Activated CD4-positive, alpha-beta T cell treated with anti-CD3 and anti-CD28 coated beads for 36 hours (primary cell): ENCODE measurements at regions of chr1 and their contacts with region 1.

Region 1: DNA sequence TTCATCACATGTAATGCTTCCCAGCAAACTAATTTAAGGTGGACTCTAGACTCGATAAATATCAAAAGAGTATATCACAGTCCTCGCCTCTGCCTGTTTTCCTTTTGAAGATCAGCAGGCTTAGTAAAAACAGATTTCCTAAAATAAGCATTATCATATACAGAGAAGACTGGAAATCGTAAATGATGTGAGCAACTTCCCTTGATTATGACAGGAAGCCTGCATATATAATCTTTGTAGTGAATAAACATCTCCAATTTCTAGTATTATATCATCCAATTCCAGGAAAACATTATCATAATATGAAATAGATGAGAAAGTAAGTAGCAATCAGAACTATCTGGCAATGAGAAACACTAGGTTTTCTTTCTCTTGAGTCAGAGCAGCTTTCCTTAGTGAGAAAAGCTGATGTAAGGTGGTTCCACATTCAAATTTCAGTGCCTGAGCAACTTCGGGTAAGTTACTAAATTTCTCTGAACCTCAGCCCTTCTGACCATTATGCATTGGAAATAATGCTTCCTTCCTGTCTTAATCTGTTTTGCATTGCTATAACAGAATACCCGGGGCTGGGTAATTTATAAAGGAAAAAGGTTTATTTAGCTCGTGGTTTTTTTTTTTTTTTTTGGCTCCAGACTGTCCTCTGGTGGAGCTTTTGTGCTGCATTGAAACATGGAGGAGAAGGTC is 12.6 kb upstream of the POU2F1 start:
- DNase-seq: no peak
- ATAC-seq: peak; percentile 76
- H3K4me3 Mint-ChIP-seq: no peak overlapping the region
- H3K27ac Mint-ChIP-seq: peak overlapping the region; percentile 89
- H3K4me1 Mint-ChIP-seq: peaks cover 23% of the 10 kb centered on the region
- H3K27me3 Mint-ChIP-seq: no peaks in the 10 kb centered on the region

Region 2: GRCh38 chr1:167105271-167106118 is 102.6 kb before region 1 on chr1:
- CTCF ChIA-PET with region 1: no interaction called
- POLR2A ChIA-PET with region 1: no interaction called
- intact Hi-C with region 1: loop called in 1 of 2 experiments (anchors 10 kb)
- DNase-seq: no peak
- ATAC-seq: no peak
- H3K4me3 Mint-ChIP-seq: no peak overlapping the region
- H3K27ac Mint-ChIP-seq: no peak overlapping the region
- H3K4me1 Mint-ChIP-seq: peaks cover 58% of the 10 kb centered on the region
- H3K27me3 Mint-ChIP-seq: no peaks in the 10 kb centered on the region

Region 3: DNA sequence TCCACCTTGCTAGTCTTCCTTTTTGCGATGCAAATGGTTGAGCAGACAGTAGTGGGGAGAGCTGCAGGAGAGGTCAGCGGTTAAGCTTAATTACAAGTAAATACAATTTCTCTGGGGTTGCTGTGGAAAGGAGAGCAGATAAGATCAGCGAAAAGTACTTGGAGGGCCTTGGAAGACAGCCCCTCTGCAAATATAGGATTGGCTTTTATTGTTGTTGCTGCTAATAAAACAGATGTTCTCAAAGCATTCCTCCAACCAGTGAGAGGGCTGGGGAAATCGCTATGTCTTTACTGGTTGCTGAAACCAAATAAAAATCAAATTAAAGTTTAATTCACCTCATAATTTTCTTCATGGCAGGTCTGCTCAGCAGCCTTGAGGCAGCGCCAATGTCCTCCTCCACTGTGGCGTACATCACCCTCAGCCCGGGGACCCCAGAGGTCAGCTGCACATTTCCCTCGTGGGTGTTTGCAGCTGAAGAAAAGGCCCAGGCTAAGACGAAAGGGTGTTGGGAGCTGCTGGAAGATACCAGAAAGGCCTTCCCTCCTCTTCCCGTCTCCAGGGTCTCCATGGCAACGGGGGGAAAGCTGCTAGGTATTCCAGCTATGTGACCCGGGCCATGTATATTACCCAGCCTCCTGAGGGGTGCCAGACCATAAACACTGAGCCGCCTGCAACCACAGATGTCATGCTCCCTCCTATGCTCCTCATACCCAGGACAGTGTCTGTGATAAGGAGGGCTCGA is 42.0 kb before region 1 on chr1:
- CTCF ChIA-PET with region 1: no interaction called
- POLR2A ChIA-PET with region 1: no interaction called
- intact Hi-C with region 1: loop called in 1 of 2 experiments (anchors 5 kb)
- DNase-seq: no peak
- ATAC-seq: no peak
- H3K4me3 Mint-ChIP-seq: no peak overlapping the region
- H3K27ac Mint-ChIP-seq: no peak overlapping the region
- H3K4me1 Mint-ChIP-seq: peaks cover 9% of the 10 kb centered on the region
- H3K27me3 Mint-ChIP-seq: peaks cover 27% of the 10 kb centered on the region